ENCODE measurements at regions of chr4 and their contacts with region 1.

Region 1: DNA sequence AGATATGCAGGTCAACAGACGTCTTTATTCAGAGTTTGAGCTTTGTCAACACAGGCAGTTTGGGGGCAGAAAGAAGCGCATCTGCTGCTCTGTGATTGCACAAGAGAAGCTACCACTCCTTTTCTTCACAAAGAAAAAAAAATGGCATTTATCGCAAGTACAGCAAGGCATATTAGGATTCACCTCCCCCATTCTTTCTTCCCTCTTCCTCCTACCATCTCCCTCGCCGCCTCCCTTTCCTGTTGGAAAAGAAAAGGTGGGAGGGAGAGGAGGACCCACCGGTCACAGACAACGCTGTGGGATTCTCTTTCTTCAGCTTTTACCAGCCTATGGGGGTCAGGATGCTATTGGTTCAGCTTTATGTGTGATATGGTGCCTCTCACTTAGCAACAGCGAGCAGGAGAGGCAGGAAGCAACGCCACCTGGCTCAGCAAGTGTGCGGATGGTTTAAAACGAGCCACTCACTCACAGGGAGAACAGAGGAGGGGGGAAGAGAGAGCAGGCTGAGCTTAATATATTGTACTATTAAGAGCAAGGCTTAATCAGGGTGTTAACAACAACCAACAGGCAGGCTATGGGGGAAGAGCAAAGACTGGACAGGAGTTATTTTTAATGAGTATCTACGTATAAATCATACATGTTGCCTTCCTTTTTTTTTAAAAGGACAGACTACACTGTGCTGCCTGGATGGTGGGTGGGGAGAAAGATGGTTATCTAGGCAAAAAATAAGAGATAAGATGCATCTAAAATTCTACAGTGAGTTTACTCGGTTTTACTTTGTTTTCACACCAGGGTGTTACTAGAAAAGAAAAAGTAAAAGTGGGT is 104.7 kb downstream of the MAML3 start:
- DNase-seq: peak; percentile 81
- H3K4me3 Mint-ChIP-seq: peak overlapping the region; percentile 67
- H3K27ac Mint-ChIP-seq: peak overlapping the region; percentile 56
- H3K4me1 Mint-ChIP-seq: peaks cover 28% of the 10 kb centered on the region
- H3K27me3 Mint-ChIP-seq: peaks cover 55% of the 10 kb centered on the region

Region 2: DNA sequence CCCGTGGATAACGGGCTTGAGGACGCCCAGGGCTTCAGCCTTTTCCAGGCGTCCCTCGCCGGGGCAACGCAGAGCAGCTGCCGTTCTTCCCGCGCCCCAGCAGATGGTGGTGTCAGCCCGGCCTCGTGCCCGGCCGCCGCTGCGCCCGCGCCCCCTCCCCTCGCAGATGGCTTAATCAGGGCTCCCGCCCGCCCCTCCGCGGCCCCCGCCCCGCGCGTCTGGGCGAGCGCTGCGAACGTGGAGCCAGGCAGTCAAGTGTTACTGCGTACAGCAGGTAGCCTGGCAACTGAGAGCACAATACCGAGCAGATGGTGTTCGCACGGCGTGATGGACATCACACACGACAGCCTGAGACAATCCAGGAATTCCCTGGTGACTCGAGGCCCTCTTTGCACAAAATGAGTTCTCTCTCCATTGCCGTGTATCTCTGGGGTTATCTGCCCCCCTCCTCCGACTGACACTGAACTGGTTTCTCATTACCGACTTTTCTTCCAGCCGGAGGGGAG is 314.3 kb before region 1 on chr4:
- intact Hi-C with region 1: loop called (anchors 2 kb)
- DNase-seq: peak; percentile 86
- H3K4me3 Mint-ChIP-seq: peak overlapping the region; percentile 76
- H3K27ac Mint-ChIP-seq: peak overlapping the region; percentile 43
- H3K4me1 Mint-ChIP-seq: peaks cover 7% of the 10 kb centered on the region
- H3K27me3 Mint-ChIP-seq: peaks cover 53% of the 10 kb centered on the region

Region 3: GRCh38 chr4:139872274-139872673 is 177.0 kb before region 1 on chr4:
- intact Hi-C with region 1: no loop called
- DNase-seq: no peak
- H3K4me3 Mint-ChIP-seq: no peak overlapping the region
- H3K27ac Mint-ChIP-seq: peak overlapping the region; percentile 17
- H3K4me1 Mint-ChIP-seq: peaks cover 8% of the 10 kb centered on the region
- H3K27me3 Mint-ChIP-seq: peaks cover 8% of the 10 kb centered on the region

Region 4: DNA sequence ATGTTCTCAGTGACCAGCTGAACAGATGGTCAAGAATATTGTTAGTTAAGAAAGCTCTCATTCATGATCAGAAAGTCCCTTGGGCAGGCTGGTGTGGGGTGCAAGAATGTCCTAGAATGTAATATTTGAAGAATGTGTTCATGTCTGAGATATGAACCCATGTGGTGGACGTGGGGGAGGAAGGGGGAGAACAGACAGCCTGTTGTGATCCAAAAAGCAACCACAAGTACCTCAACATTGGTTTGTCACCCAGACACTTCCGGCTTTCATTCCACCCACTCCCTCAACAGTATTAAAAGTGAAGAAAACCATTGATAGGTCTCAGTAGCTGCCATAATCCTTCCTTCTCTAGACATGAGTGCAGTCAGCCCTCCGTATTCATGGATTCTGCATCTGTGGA is 22.6 kb after region 1 on chr4:
- intact Hi-C with region 1: loop called (anchors 1 kb)
- DNase-seq: peak; percentile 89
- H3K4me3 Mint-ChIP-seq: peak overlapping the region; percentile 73
- H3K27ac Mint-ChIP-seq: peak overlapping the region; percentile 83
- H3K4me1 Mint-ChIP-seq: peaks cover 44% of the 10 kb centered on the region
- H3K27me3 Mint-ChIP-seq: peaks cover 41% of the 10 kb centered on the region

Region 5: GRCh38 chr4:140103676-140104075 is 54.4 kb after region 1 on chr4:
- intact Hi-C with region 1: loop called (anchors 2 kb)
- DNase-seq: peak; percentile 83
- H3K4me3 Mint-ChIP-seq: peak overlapping the region; percentile 37
- H3K27ac Mint-ChIP-seq: peak overlapping the region; percentile 79
- H3K4me1 Mint-ChIP-seq: peaks cover 51% of the 10 kb centered on the region
- H3K27me3 Mint-ChIP-seq: peaks cover 17% of the 10 kb centered on the region

Region 6: DNA sequence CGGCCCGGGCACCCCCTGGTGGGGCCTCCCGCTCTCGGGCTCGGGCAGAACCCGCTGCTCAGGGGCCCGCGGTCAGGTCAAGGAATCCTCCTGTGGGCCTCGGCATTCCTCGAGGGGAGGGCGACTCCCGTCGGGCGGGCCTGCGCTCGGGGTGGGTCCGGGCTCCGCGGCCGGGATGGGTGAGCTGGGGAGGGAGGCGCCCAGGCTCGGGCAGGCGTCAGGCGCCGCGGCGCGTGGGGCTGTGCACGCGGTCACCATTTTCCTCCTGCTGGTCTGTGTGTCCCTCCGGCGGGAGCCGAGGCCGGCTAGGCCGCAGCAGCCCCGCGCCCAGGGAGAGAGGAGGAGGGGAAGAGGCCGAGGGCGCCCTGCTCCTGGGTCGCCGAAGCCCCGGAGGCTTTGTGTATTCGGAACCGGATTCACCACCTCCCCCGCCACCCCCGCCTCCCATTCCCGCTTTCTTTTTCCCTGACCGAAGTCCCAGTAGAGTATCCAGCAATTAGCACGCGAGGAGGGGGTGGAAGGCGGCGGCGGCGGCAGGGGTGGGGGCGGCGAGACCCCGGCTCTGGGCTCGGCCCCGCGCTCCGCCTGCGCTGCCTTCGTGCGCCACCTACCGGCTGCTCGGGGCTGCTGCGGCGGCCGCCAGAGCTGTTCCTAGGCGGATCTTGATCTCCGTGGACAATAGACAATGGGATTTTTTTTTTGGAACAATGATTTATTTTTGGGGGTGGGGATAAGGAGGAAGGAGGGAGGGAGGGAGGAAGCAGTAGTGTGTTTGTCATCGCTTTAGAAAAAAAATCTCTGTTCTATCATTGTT is 203.7 kb after region 1 on chr4:
- intact Hi-C with region 1: loop called (anchors 1 kb)
- DNase-seq: peak; percentile 89
- H3K4me3 Mint-ChIP-seq: peak overlapping the region; percentile 62
- H3K27ac Mint-ChIP-seq: no peak overlapping the region
- H3K4me1 Mint-ChIP-seq: peaks cover 28% of the 10 kb centered on the region
- H3K27me3 Mint-ChIP-seq: peaks cover 23% of the 10 kb centered on the region